Adrenal gland (tissue), 19 donors: ENCODE measurements at regions of chr18 and their contacts with region 1.

Region 1: DNA sequence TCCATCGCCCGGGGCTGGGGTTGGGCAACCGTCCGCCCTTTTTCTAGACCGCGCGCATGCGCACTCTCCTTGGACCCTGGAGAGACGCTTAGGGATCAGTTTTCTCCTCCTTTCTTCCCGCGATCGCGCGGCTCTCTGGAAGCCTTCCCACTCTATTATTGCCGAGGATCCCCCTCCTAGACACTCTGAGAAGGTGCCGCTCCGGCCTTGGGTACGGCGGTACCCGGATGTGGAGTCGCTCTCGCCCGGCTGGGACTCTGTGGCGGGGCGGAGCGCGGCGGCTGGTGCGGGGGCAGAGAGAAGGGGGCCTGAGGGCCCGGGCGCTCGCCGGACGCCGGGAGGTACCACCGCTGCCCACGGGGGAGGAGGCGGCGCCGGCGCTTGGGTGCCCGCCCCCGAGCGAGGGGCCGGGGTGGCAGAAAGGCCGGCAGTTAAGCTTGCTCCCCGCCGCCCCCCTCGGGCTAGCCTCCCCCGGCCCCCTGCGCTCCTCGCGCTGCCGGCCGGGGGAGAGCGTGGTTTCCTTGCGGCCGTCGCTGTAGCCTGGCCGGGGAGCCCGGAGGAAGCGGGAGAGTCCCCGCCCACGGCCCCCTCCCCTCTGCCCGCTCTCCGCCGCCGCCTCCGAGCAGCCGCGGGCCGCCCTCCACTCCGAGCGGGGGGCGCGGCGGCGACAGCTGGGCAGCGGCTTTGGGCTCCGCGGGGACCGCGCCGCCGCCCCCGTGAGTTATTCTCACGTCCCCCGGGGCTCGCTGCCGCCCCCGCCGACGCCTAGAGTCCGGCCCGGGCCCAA is at the start of gene MIB1:
- DNase-seq: peak in 2 of 7 donors; percentile 61 to 99
- H3K4me3 ChIP-seq: peak within 1 kb of the TSS; percentile 5 to 95 (median 66)
- H3K27ac ChIP-seq: peak within 1 kb of the TSS; percentile 62 to 98 (median 97)
- H3K4me1 ChIP-seq: peaks cover 7 to 23% of the 10 kb centered on the region in 2 donors
- H3K27me3 ChIP-seq: no peaks in the 10 kb centered on the region
- CTCF ChIP-seq: no peak
- POLR2A ChIP-seq: peak; percentile 62 to 67
- total RNA-seq, gene MIB1: 13.8 to 50.1 (median 22.2) TPM

Region 2: DNA sequence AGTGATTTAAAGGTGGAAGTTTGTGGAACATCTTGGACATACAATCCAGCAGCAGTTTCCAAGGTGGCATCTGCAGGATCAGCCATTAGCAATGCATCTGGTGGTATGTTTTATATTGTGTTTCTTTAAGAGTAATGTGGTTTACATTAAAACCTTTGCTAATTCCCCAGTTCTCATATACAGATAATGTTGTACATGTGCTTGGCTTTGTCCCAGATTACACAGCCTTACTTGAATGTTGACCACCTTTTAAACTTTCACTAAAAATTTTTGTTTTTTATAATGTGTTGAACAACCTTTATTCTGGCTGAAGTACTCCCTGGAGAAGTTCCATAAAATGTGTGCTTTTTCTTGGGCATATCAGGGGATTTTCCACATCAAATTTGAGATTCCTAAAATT is 57.2 kb after region 1 on chr18:
- intact Hi-C with region 1: loop called in 1 of 2 experiments (anchors 10 kb)
- DNase-seq: no peak
- H3K4me3 ChIP-seq: no peak overlapping the region
- H3K27ac ChIP-seq: no peak overlapping the region
- H3K4me1 ChIP-seq: no peaks in the 10 kb centered on the region
- H3K27me3 ChIP-seq: no peaks in the 10 kb centered on the region
- CTCF ChIP-seq: no peak
- POLR2A ChIP-seq: no peak